ENCODE measurements at regions of chr20 and their contacts with region 1.

Region 1: GRCh38 chr20:34069341-34070078 is 42.5 kb downstream of the EIF2S2 start:
- DNase-seq: peak; percentile 86 to 93
- H3K4me3 ChIP-seq: no peak overlapping the region
- H3K27ac ChIP-seq: peak overlapping the region in 3 of 5 donors; percentile 1 to 41 (median 39)
- H3K4me1 ChIP-seq: peaks cover 12 to 47% (median 31%) of the 10 kb centered on the region in 4 donors
- H3K27me3 ChIP-seq: no peaks in the 10 kb centered on the region
- CTCF ChIP-seq: peak in 5 of 7 experiments; percentile 70 to 92 (median 84)
- EP300 ChIP-seq: no peak
- POLR2A ChIP-seq: no peak

Region 2: DNA sequence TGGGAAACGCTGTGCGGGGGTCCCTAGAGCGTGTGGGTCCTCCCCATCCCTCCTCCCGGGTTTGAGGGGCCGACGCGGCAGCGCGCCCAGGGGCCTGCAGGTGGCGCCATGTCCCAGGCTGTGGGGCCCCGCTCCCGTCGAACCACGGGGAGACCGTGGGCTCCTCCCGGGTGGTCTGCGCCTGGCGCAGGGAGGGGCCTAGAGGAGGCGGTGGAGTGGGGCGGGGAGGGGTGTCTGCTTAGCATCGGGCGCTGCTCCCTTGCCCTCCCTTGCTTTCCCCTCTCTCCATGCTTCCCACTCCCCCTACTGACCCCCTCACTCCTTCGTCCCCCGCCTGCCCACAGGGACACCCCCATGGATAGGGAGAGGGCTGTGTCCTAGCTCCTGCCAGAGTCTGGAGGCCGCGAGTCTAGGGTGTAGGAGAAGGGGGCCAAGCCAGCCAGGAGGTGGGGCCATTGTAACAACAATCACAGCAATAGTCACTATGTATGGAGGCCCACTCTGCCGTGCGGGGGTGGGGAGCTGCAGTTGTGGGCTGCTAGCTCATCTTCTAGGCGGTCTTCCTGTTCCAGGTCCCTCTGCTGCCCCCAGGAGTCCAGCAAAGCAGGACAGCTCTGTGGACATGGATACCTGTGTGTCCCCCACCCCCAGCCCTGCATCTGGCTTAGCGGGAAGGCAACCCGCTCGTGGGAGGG is 206.7 kb before region 1 on chr20:
- intact Hi-C with region 1: loop called (anchors 5 kb)
- DNase-seq: peak; percentile 52 to 91
- H3K4me3 ChIP-seq: peak overlapping the region in 2 of 4 donors; percentile 4 to 6
- H3K27ac ChIP-seq: no peak overlapping the region
- H3K4me1 ChIP-seq: peaks cover 7 to 28% (median 16%) of the 10 kb centered on the region in 4 donors
- H3K27me3 ChIP-seq: no peaks in the 10 kb centered on the region
- CTCF ChIP-seq: peak in 5 of 7 experiments; percentile 15 to 73 (median 54)
- EP300 ChIP-seq: no peak
- POLR2A ChIP-seq: no peak

Region 3: GRCh38 chr20:33933469-33933909 is 136.0 kb before region 1 on chr20:
- intact Hi-C with region 1: loop called (anchors 10 kb)
- DNase-seq: peak; percentile 65 to 67
- H3K4me3 ChIP-seq: no peak overlapping the region
- H3K27ac ChIP-seq: no peak overlapping the region
- H3K4me1 ChIP-seq: peaks cover 0 to 5% (median 0%) of the 10 kb centered on the region in 4 donors
- H3K27me3 ChIP-seq: no peaks in the 10 kb centered on the region
- CTCF ChIP-seq: peak in 3 of 7 experiments; percentile 12 to 54 (median 42)
- EP300 ChIP-seq: no peak
- POLR2A ChIP-seq: no peak

Region 4: GRCh38 chr20:33992923-33993575 is 76.5 kb before region 1 on chr20:
- intact Hi-C with region 1: loop called (anchors 10 kb)
- DNase-seq: peak; percentile 100
- H3K4me3 ChIP-seq: peak overlapping the region; percentile 75 to 96 (median 94)
- H3K27ac ChIP-seq: peak overlapping the region; percentile 93 to 99 (median 98)
- H3K4me1 ChIP-seq: peaks cover 39 to 55% (median 51%) of the 10 kb centered on the region in 4 donors
- H3K27me3 ChIP-seq: no peaks in the 10 kb centered on the region
- CTCF ChIP-seq: no peak
- EP300 ChIP-seq: no peak
- POLR2A ChIP-seq: peak in 2 of 4 donors; percentile 45 to 74

Measured in stomach (tissue), 19 donors.